ENCODE measurements at regions of chr6 and their contacts with region 1.

Region 1: GRCh38 chr6:110958329-110959192 is at the start of gene GTF3C6:
- DNase-seq: peak; percentile 91 to 93
- H3K4me3 ChIP-seq: peak within 1 kb of the TSS; percentile 96
- H3K4me3 Mint-ChIP-seq: peak within 1 kb of the TSS; percentile 94
- H3K27ac Mint-ChIP-seq: peak within 1 kb of the TSS; percentile 97
- H3K4me1 ChIP-seq: peaks cover 10% of the 10 kb centered on the region
- H3K4me1 Mint-ChIP-seq: peaks cover 7% of the 10 kb centered on the region
- H3K27me3 ChIP-seq: no peaks in the 10 kb centered on the region
- H3K27me3 Mint-ChIP-seq: no peaks in the 10 kb centered on the region
- CTCF ChIP-seq: no peak
- total RNA-seq, gene GTF3C6: 109 and 114 TPM in 2 replicates

Region 2: DNA sequence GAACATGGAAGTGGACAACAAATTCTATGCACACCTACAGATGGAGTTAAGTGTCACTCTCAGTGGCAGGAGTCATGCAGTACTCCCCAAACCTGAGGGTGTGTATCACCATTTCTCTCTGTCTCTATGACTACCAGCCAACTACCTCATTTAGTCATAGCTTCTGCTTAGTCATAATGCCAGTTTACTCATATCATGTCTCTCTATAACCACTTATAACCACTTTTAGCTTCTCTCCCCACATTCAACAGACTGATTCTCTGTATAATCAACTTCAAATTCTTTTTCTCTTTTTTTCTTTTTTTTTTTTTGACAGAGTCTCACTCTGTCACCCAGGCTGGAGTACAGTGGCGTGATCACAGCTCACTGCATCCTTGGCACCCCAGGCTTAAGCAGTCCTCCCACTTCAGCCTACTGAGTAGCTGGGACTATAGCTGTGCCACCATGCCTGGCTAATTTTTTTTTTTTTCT is 13.8 kb before region 1 on chr6:
- CTCF ChIA-PET with region 1: no interaction called
- POLR2A ChIA-PET with region 1: no interaction called
- intact Hi-C with region 1: no loop called
- DNase-seq: no peak
- H3K4me3 ChIP-seq: no peak overlapping the region
- H3K4me3 Mint-ChIP-seq: no peak overlapping the region
- H3K27ac Mint-ChIP-seq: no peak overlapping the region
- H3K4me1 ChIP-seq: no peaks in the 10 kb centered on the region
- H3K4me1 Mint-ChIP-seq: no peaks in the 10 kb centered on the region
- H3K27me3 ChIP-seq: no peaks in the 10 kb centered on the region
- H3K27me3 Mint-ChIP-seq: no peaks in the 10 kb centered on the region
- CTCF ChIP-seq: no peak

Region 3: GRCh38 chr6:110981202-110981600 is 22.6 kb after region 1 on chr6:
- CTCF ChIA-PET with region 1: interaction called, 3 read pairs
- POLR2A ChIA-PET with region 1: interaction called, 18 read pairs
- intact Hi-C with region 1: loop called (anchors 2 kb)
- DNase-seq: no peak
- H3K4me3 ChIP-seq: peak overlapping the region; percentile 86
- H3K4me3 Mint-ChIP-seq: peak overlapping the region; percentile 95
- H3K27ac Mint-ChIP-seq: peak overlapping the region; percentile 98
- H3K4me1 ChIP-seq: no peaks in the 10 kb centered on the region
- H3K4me1 Mint-ChIP-seq: peaks cover 12% of the 10 kb centered on the region
- H3K27me3 ChIP-seq: no peaks in the 10 kb centered on the region
- H3K27me3 Mint-ChIP-seq: no peaks in the 10 kb centered on the region
- CTCF ChIP-seq: no peak